ENCODE measurements at regions of chr5 and their contacts with region 1.

Region 1: GRCh38 chr5:179763215-179763945 is 30.4 kb upstream of the LTC4S start:
- DNase-seq: no peak

Region 2: DNA sequence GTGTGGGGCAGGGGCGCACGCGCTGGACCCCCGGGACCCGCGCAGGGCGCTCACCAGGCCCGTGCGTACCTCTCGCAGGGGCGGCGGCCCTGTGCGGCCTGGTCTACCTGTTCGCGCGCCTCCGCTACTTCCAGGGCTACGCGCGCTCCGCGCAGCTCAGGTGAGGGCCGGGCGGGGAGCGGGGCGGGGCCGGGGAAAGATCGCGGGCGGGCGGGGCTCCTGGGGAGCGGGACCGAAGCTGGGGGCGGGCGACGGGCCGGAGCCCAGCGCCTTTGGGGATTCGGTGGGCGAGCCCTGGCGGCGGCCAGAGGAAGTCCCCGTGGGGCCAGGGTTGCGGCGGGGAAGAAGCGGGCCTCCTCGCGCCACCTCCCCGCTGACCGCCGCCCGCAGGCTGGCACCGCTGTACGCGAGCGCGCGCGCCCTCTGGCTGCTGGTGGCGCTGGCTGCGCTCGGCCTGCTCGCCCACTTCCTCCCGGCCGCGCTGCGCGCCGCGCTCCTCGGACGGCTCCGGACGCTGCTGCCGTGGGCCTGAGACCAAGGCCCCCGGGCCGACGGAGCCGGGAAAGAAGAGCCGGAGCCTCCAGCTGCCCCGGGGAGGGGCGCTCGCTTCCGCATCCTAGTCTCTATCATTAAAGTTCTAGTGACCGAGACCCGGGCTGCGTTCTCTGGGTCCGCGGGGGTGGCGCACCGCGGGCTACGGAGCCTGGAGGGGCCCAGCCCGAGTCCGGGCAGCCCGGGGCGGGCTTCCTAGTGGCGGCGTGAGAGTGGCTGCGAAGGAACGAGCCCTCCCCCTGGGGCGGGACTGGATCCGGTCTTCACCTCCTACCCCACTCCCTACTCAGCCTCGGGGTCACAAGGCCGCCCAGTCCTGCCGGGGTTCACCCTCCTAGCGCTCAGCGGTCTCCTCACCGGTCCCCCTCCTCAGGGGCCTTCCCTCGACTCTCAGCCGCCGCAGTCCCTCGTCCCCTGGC is 32.8 kb after region 1 on chr5:
- intact Hi-C with region 1: loop called (anchors 1 kb)
- DNase-seq: peak; percentile 92

Region 3: DNA sequence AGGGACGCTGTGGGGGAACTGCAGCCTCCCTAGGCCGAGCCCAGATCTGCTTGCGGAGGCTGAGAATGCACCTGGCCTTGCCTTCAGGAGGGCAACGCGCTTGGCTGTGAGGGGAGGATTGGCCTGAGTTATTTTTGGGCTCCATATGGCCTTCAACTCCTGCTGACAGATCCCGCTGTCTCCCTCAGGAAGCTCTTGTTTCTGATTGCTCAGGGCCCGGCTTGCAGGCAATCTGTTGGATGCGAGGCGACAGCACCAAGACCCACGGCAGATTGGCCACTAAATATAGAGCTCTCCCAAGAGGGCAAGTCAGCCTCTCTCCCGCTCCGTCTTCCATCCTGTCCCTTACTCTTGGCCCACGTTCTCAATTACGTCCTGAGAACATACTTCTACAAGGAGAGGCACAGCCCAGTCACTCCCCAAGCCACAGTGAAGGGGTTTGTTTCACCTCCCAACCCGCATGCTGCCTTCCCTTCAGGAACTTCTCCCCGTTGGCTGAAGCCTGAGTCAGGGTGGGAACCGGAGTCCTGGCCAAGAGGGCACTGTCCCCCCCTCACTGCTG is 392.1 kb after region 1 on chr5:
- intact Hi-C with region 1: no loop called
- DNase-seq: peak; percentile 70

Measured in cardiac septum (tissue), 1 donor.